Posterior vena cava (tissue), 2 donors: ENCODE measurements at regions of chr3 and their contacts with region 1.

Region 1: GRCh38 chr3:94394885-94395284 is 332.0 kb downstream of the NSUN3 start:
- DNase-seq: no peak

Region 2: GRCh38 chr3:94092086-94092485 is 302.8 kb before region 1 on chr3:
- intact Hi-C with region 1: no loop called
- DNase-seq: no peak

Region 3: DNA sequence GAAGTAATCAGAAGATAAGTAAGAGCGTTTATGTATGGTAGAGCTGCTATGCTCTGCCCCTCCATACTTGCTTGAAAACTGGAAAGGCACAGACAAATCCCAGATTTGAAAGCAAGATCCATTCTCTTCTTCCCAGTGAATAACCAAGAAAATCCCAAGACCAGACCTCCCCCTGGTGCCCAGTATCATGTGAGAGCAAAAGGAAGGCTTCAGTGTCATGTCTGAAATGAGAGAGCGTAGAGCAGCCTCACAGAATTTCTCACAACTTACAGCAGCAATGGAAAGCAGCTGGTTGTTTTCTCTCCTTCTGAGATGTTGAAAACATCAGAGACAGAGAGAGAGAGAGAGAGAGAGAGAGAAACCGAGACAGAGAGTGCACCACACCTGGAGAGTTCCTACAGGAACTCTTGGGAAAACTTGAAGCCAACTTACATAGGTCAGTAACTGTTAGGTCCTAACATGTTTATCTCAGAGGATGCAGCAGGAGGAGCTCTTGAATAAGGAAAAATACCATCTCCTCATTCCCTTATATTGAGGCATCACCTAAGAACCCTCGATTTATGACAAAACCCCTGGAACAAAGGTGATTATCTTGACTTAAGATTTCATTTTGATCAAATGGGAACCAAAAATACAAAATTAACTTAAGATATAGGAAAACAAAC is 58.7 kb before region 1 on chr3:
- intact Hi-C with region 1: no loop called
- DNase-seq: no peak

Region 4: DNA sequence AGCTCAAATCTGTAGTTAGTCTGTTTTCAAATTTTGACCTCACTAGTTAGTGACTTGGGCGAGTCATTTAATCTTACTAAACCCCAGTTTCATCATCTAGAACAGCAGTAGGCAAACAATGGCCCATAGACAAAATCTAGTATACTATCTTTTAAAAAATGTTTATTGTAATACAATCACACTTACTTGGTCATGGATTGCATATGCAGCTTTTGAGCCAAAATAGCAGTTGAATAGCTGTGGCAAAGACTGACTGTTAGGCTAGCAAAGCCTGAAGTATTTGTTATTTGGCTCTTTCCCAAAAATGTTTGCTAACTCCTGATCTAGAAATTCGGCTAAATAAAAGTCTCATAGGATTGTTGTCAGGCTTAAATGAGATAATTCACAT is 18.8 kb after region 1 on chr3:
- intact Hi-C with region 1: loop called in 1 of 2 experiments (anchors 2 kb)
- DNase-seq: no peak